ENCODE measurements at regions of chr1 and their contacts with region 1.

Region 1: GRCh38 chr1:150186789-150187559 is 37.3 kb downstream of the PLEKHO1 start:
- DNase-seq: peak; percentile 19
- H3K4me3 Mint-ChIP-seq: peak overlapping the region; percentile 44
- H3K27ac Mint-ChIP-seq: peak overlapping the region; percentile 56
- H3K4me1 Mint-ChIP-seq: peaks cover 14% of the 10 kb centered on the region
- H3K27me3 Mint-ChIP-seq: no peaks in the 10 kb centered on the region

Region 2: GRCh38 chr1:149962123-149962548 is 224.8 kb before region 1 on chr1:
- CTCF ChIA-PET with region 1: interaction called, 15 read pairs
- POLR2A ChIA-PET with region 1: interaction called, 3 read pairs
- intact Hi-C with region 1: loop called (anchors 2 kb)
- DNase-seq: peak; percentile 47
- H3K4me3 Mint-ChIP-seq: no peak overlapping the region
- H3K27ac Mint-ChIP-seq: peak overlapping the region; percentile 9
- H3K4me1 Mint-ChIP-seq: peaks cover 22% of the 10 kb centered on the region
- H3K27me3 Mint-ChIP-seq: no peaks in the 10 kb centered on the region

Region 3: GRCh38 chr1:150067184-150068036 is 119.6 kb before region 1 on chr1 and contains the start of gene VPS45:
- CTCF ChIA-PET with region 1: interaction called, 73 read pairs
- POLR2A ChIA-PET with region 1: no interaction called
- intact Hi-C with region 1: no loop called
- DNase-seq: peak; percentile 92
- H3K4me3 Mint-ChIP-seq: peak within 1 kb of the TSS; percentile 94
- H3K27ac Mint-ChIP-seq: peak within 1 kb of the TSS; percentile 96
- H3K4me1 Mint-ChIP-seq: peaks cover 33% of the 10 kb centered on the region
- H3K27me3 Mint-ChIP-seq: no peaks in the 10 kb centered on the region
- total RNA-seq, gene VPS45: 26.5 to 28.3 TPM

Region 4: DNA sequence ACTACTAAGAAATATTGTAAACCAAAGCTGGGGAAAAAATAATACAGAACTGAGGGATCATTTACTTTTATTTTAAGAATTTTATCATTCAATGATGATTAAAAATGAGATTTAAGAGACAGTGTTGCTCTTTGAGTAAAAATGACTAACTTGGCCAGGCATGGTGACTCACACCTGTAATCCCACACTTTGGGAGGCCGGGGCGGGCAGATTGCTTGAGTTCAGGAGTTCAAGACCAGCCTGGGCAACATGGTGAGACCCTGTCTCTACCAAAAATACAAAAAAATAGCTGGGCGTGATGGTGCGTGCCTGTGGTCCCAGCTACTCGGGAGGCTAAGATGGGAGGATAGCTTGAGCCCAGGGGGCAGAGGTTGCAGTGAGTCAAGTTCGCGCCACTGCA is 59.1 kb before region 1 on chr1:
- CTCF ChIA-PET with region 1: interaction called, 13 read pairs
- POLR2A ChIA-PET with region 1: no interaction called
- intact Hi-C with region 1: no loop called
- DNase-seq: peak; percentile 73
- H3K4me3 Mint-ChIP-seq: no peak overlapping the region
- H3K27ac Mint-ChIP-seq: peak overlapping the region; percentile 78
- H3K4me1 Mint-ChIP-seq: peaks cover 25% of the 10 kb centered on the region
- H3K27me3 Mint-ChIP-seq: no peaks in the 10 kb centered on the region

Region 5: GRCh38 chr1:150168960-150169601 is 17.9 kb before region 1 on chr1:
- CTCF ChIA-PET with region 1: interaction called, 19 read pairs
- POLR2A ChIA-PET with region 1: interaction called, 3 read pairs
- intact Hi-C with region 1: no loop called
- DNase-seq: peak; percentile 76
- H3K4me3 Mint-ChIP-seq: no peak overlapping the region
- H3K27ac Mint-ChIP-seq: no peak overlapping the region
- H3K4me1 Mint-ChIP-seq: no peaks in the 10 kb centered on the region
- H3K27me3 Mint-ChIP-seq: no peaks in the 10 kb centered on the region

Region 6: DNA sequence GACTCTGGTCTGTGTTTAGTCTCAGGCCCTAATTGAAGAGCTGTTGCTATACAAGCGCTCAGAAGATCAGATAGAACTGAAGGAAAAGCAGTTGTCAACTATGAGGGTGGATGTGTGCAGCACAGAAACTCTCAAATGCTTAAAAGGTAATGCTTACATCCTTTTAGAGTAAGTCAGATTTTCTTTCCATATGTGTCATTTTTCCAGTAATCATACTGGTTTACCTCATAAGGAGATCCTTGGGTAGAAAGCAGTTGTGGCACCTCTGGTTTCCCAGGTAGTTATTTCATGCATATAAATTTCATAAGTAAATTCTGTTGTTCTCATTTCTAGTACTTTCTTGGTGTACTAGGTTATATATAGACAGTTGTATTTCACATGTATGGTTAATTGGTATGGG is 257.3 kb after region 1 on chr1:
- CTCF ChIA-PET with region 1: no interaction called
- POLR2A ChIA-PET with region 1: no interaction called
- intact Hi-C with region 1: no loop called
- DNase-seq: peak; percentile 13
- H3K4me3 Mint-ChIP-seq: no peak overlapping the region
- H3K27ac Mint-ChIP-seq: peak overlapping the region; percentile 87
- H3K4me1 Mint-ChIP-seq: peaks cover 12% of the 10 kb centered on the region
- H3K27me3 Mint-ChIP-seq: no peaks in the 10 kb centered on the region

Measured in activated CD4-positive, alpha-beta memory T cell treated with anti-CD3 and anti-CD28 coated beads for 36 hours (primary cell).